ENCODE measurements at regions of chr7 and their contacts with region 1.

Region 1: DNA sequence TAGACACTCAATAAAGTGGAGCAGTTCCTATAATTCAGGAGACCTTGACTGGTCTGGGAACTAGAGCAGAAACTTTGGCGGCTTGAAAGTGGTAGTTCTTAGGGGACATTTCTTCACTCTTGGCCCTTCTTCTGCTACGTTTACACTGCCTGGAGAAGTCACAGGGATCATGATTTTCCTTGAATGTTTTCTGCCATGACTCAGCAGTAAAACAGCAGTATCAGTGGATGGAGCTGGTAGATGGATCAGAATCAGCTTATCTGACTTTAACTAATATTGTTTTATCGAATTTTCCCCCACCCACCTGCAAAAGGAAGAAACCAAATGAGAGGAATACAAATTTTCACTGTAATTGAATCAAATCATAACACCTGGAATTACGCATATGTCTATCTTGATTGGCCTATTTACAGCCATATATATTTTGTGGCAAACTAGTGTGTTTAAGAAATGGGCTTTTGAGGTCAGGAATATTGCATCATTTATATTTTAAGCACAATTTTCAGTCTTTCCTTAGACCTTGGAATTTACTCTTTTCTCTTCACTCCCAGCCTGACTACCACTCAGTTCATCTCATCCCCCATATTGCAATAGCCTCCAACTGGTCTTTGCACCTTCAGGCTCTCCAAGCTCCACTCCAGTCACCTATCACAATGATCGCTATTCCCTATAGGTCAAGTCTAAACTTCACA is 14.9 kb upstream of the DLX5 start:
- DNase-seq: no peak
- ATAC-seq: no peak
- H3K4me3 ChIP-seq: no peak overlapping the region
- H3K27ac ChIP-seq: no peak overlapping the region
- H3K4me1 ChIP-seq: no peaks in the 10 kb centered on the region
- H3K27me3 ChIP-seq: peaks cover 10% of the 10 kb centered on the region
- CTCF ChIP-seq: no peak

Region 2: DNA sequence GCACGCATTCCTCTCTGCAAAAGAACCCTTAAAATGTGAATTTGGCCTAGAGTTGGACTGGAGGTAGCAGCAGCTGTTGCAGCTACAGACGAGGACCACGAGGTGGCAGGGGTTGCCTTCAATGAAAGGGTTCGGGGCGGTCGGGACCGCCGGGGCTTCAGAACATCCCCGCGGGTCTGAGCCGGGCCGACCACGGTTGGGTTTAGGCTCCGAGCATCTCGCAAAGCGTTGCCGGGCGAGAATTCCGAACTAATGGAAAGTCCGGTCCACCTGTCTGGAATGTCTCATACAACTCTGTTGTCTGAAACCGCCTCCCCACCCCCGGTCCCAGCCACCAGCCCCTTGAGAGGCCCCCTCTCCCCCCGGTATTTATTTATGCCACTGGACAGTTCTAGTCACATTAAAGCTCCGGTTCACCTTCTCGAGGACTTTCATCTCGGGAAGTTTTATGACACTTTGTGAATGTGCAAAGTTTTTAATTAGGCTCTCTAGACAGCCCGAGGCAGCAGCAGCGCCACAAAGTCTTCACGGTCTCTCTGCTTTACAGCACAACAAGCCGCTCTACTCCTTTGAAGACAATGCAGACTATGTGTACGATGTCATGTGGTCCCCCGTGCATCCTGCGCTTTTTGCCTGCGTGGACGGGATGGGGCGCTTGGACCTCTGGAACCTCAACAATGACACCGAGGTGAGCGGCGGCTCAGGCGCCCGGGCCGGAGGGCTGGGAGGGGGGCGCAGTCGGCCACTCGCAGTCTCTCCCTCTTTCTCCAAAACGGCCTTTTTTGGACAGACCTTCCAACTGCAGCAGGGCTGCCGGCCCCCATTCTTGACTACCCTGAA is 963.8 kb before region 1 on chr7:
- intact Hi-C with region 1: loop called (anchors 10 kb)
- DNase-seq: peak; percentile 73
- ATAC-seq: peak; percentile 87
- H3K4me3 ChIP-seq: peak overlapping the region; percentile 47
- H3K27ac ChIP-seq: no peak overlapping the region
- H3K4me1 ChIP-seq: peaks cover 7% of the 10 kb centered on the region
- H3K27me3 ChIP-seq: peaks cover 24% of the 10 kb centered on the region
- CTCF ChIP-seq: peak; percentile 78